IMR-90 (cell line): ENCODE measurements at regions of chr9 and their contacts with region 1.

Region 1: DNA sequence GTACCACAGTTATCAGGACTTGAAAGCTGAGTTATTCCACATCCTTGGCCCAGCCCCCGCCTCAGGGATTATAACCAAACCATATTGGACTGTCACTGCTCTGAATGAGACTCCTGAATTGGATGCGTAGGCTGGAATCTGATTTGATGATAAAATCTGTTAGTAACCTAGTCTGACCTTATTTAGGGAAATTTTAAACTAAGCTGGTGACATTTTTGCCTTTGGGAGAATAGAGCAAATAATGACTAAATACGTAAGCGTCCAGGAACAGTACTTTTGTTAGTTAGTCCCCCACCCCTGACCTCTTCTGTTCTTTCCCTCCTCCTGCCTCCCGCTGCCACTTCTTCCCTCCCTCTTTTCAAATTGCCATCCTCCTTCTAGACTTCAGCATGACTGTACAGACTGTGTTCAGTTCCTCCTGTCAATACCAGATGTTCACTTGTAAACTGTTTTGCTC is 92.6 kb downstream of the TLE4 start:
- DNase-seq: peak; percentile 36
- ATAC-seq: peak; percentile 28; the same call in 1 of the 2 replicates
- H3K4me3 ChIP-seq: no peak overlapping the region
- H3K27ac ChIP-seq: no peak overlapping the region
- H3K4me1 ChIP-seq: peaks cover 13% of the 10 kb centered on the region
- H3K27me3 ChIP-seq: no peaks in the 10 kb centered on the region
- CTCF ChIP-seq: no peak
- POLR2A ChIP-seq: no peak
- RAD21 ChIP-seq: no peak

Region 2: DNA sequence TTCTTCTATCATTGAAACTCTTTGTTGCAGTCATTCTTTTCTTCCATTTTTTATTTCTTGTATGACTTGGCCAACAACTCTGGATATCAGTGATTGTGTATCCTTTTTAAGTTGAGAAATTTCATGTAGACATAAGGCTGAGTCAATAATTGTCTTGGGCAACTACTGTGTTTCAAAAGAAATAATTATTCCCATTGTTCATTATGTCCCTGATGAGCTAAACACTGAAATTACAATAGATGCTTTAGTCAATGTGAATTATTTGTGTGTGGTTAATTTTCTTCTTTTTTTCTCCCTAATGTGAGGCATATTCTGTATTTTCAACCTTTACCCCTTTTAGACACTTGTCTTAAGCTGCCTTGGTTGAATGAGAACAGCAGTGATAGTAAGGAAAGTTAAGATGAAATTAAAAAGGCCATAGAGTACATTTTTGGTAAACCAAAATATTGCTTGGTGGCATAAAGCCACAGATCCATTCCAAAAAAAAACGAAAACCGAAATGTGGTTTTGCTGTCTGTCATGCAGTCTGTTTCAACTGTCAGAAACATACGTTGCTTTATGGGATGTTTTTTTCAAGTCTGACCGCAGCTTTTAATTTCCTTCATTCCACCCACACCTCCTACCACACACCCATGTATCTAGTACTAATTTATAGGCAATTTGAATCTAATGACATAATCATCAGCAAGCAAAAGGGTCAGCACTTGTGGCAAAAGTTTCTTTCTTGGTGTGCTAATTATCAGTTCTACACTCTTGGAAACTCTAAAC is 71.5 kb before region 1 on chr9:
- CTCF ChIA-PET with region 1: no interaction called
- POLR2A ChIA-PET with region 1: interaction called, 12 read pairs
- dilution Hi-C with region 1: no loop called
- in situ Hi-C with region 1: no loop called
- intact Hi-C with region 1: no loop called
- DNase-seq: no peak
- ATAC-seq: no peak
- H3K4me3 ChIP-seq: no peak overlapping the region
- H3K27ac ChIP-seq: no peak overlapping the region
- H3K4me1 ChIP-seq: no peaks in the 10 kb centered on the region
- H3K27me3 ChIP-seq: no peaks in the 10 kb centered on the region
- CTCF ChIP-seq: no peak
- POLR2A ChIP-seq: no peak
- RAD21 ChIP-seq: no peak

Region 3: GRCh38 chr9:79630521-79631403 is 33.6 kb before region 1 on chr9:
- CTCF ChIA-PET with region 1: no interaction called
- POLR2A ChIA-PET with region 1: no interaction called
- dilution Hi-C with region 1: no loop called
- in situ Hi-C with region 1: no loop called
- intact Hi-C with region 1: no loop called
- DNase-seq: no peak
- ATAC-seq: no peak
- H3K4me3 ChIP-seq: no peak overlapping the region
- H3K27ac ChIP-seq: no peak overlapping the region
- H3K4me1 ChIP-seq: no peaks in the 10 kb centered on the region
- H3K27me3 ChIP-seq: no peaks in the 10 kb centered on the region
- CTCF ChIP-seq: no peak
- POLR2A ChIP-seq: no peak
- RAD21 ChIP-seq: no peak